ENCODE measurements at regions of chr1 and their contacts with region 1.

Region 1: DNA sequence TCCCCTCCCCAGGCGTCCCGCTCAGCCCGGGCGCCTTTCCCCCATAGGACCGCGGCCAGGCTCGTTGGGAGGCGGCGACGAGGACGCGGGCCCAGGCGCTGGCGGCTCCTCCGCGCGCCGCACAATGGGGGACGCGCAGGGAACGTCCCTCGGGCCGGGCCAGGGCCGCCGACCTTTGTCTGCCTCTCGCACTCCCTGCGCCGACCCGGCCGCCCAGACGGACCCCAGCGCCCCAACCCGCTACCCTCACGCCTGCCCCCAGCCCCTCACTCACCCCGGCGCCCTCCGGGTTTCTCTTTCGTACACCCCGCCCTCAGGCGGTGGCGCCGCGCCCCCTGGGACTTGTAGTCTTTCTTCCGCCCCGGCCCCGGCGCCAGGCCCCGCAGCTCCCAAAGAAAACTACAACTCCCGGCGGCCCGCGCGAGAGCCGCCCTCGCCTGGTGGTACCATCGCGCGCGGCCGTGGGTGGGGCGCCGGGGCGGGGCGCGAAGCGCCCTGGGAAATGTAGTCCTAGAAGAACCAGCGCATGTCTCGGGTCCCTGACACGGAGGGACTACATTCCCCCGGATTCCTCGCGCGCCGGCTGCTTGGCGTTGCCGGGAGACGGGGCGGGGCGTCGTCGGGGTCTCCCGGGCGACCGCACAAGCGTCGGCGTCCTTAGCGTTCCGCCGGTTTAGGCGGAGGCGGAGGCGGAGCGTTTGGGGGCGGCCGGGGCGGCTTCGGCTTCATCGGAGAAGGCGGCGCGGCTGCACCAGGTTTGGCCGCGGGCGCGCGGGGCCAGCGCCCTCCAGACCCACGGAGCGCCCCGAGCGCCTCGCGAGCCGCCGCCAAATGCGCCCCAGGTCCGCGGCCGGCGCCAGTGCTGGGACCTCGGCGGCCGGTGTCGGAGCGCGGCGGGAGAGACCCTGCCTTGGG is at the start of gene C1orf159:
- DNase-seq: peak; percentile 99
- ATAC-seq: peak; percentile 92
- H3K4me3 Mint-ChIP-seq: peak within 1 kb of the TSS; percentile 88
- H3K27ac Mint-ChIP-seq: peak within 1 kb of the TSS; percentile 80
- H3K4me1 Mint-ChIP-seq: peaks cover 9% of the 10 kb centered on the region
- H3K27me3 Mint-ChIP-seq: peaks cover 5% of the 10 kb centered on the region
- CTCF ChIP-seq: no peak
- total RNA-seq, gene C1orf159: 20.8 and 26.5 TPM in 2 replicates

Region 2: DNA sequence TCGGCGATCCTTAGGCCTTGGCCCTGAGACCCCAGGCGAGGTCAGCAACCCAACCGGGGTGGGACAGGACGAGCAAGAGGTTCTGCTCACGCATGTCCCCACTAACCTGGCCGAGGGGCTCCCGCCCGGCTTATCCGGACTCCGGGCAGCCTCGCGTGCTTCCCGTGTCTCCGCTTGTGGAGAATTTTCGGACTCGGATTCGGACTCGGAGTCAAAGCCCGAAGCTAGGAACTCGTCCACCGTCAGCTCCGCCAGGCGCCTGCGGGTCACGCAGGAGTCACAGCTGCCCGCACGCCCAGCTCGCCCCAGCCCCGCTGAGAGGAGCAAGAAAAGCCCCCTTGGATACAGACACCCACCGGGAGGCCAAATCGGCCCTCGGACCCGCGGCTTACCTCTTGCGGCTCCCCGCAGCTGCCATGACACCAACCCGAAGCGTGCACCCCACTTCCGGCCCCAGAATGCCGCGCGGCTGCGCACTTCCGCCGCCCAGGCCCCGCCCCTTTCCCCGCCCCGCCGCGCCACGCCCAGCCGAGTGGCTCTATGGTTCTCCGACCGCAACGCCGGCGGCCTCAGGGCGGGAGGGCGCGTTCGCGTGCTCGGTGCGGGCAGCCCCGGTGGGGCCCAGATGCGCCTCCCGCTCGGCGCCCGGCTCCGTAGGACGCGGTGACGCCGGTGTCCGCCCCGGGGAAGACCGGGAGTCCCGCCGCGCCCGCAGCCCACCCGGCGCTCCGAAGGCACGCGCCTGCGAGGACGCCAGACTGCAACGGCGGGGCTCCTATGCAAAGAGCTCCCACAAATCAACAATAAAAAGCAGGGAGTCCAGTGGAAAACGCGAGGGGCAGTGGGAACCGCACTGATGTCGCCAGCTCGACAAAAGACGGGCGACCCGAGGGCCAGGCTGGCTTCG is 157.0 kb before region 1 on chr1 and contains the start of gene NOC2L:
- CTCF ChIA-PET with region 1: no interaction called
- POLR2A ChIA-PET with region 1: no interaction called
- intact Hi-C with region 1: loop called (anchors 1 kb)
- DNase-seq: peak; percentile 95
- ATAC-seq: peak; percentile 90
- H3K4me3 Mint-ChIP-seq: peak within 1 kb of the TSS; percentile 89
- H3K27ac Mint-ChIP-seq: peak within 1 kb of the TSS; percentile 56
- H3K4me1 Mint-ChIP-seq: peaks cover 28% of the 10 kb centered on the region
- H3K27me3 Mint-ChIP-seq: no peaks in the 10 kb centered on the region
- CTCF ChIP-seq: no peak
- total RNA-seq, gene NOC2L: 95.5 and 96.8 TPM in 2 replicates

Region 3: GRCh38 chr1:1019122-1019999 is 96.7 kb before region 1 on chr1:
- CTCF ChIA-PET with region 1: no interaction called
- POLR2A ChIA-PET with region 1: no interaction called
- intact Hi-C with region 1: loop called (anchors 1 kb)
- DNase-seq: peak; percentile 84
- ATAC-seq: peak; percentile 87
- H3K4me3 Mint-ChIP-seq: peak overlapping the region; percentile 72
- H3K27ac Mint-ChIP-seq: no peak overlapping the region
- H3K4me1 Mint-ChIP-seq: peaks cover 14% of the 10 kb centered on the region
- H3K27me3 Mint-ChIP-seq: peaks cover 4% of the 10 kb centered on the region
- CTCF ChIP-seq: no peak

Region 4: DNA sequence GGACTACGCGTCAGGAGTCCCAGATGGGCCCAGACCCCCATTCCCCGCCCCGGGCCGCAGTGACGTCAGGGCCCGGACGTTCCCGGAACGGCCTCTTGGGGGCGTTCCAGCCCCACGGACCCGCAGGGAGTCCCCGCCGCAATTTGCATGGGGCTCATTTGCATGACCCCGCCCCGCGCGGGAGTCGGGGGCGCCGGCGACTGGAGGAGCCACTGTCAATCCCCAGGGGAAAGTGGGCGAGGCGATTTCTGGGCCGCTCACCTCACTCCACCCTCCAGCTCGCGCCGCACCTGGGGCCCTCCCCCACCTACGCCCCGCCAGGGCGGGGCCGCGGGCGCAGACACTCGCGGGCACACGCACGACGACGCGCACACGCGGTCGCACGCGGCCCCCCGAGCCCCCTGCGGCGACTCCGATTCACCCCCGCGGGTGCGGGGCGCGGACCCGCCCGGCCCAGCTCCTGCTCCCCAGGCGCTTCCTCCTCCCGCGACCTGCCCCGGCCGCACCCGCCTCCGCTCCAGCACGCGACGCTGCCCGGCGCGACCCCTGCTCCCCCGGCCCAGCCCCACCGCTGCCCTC is 82.9 kb before region 1 on chr1:
- CTCF ChIA-PET with region 1: interaction called, 7 read pairs
- POLR2A ChIA-PET with region 1: interaction called, 13 read pairs
- intact Hi-C with region 1: loop called (anchors 2 kb)
- DNase-seq: peak; percentile 97
- ATAC-seq: peak; percentile 96
- H3K4me3 Mint-ChIP-seq: peak overlapping the region; percentile 72
- H3K27ac Mint-ChIP-seq: peak overlapping the region; percentile 24
- H3K4me1 Mint-ChIP-seq: peaks cover 19% of the 10 kb centered on the region
- H3K27me3 Mint-ChIP-seq: no peaks in the 10 kb centered on the region
- CTCF ChIP-seq: peak; percentile 67

Region 5: DNA sequence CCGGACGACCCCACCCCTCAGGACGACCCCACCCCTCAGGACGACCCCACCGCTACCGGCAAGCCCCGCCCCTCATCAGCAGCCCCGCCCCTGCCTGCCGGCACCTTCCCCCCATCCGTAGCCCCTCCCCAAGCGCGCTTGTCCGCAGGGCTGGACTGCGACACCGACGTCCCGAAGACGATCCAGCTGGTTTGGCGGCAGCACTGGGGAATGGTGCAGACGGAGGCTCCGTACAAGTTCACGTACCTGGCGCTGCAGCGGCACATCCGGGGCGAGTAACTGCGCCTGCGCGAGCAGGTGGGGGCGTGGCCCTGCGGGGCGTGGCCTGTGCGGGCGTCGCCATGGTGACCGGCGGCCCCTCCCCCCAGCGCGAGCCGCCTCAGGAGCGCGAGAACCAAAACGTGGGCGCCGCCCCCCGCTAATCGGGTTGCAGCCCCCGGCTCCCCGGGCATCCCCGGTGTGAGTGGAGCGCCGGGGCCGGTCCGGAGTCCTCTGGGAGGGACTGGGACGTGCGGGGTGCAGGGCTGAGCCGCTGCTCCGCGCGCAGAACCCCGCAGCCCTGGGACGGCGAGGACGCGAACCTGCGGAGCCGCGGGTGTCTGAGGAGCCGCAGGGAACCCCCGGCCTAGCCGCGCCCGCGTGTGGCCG is 46.9 kb before region 1 on chr1:
- CTCF ChIA-PET with region 1: interaction called, 6 read pairs
- POLR2A ChIA-PET with region 1: interaction called, 9 read pairs
- intact Hi-C with region 1: loop called (anchors 1 kb)
- DNase-seq: peak; percentile 95
- ATAC-seq: peak; percentile 47
- H3K4me3 Mint-ChIP-seq: peak overlapping the region; percentile 81
- H3K27ac Mint-ChIP-seq: peak overlapping the region; percentile 72
- H3K4me1 Mint-ChIP-seq: peaks cover 37% of the 10 kb centered on the region
- H3K27me3 Mint-ChIP-seq: peaks cover 3% of the 10 kb centered on the region
- CTCF ChIP-seq: no peak

Region 6: DNA sequence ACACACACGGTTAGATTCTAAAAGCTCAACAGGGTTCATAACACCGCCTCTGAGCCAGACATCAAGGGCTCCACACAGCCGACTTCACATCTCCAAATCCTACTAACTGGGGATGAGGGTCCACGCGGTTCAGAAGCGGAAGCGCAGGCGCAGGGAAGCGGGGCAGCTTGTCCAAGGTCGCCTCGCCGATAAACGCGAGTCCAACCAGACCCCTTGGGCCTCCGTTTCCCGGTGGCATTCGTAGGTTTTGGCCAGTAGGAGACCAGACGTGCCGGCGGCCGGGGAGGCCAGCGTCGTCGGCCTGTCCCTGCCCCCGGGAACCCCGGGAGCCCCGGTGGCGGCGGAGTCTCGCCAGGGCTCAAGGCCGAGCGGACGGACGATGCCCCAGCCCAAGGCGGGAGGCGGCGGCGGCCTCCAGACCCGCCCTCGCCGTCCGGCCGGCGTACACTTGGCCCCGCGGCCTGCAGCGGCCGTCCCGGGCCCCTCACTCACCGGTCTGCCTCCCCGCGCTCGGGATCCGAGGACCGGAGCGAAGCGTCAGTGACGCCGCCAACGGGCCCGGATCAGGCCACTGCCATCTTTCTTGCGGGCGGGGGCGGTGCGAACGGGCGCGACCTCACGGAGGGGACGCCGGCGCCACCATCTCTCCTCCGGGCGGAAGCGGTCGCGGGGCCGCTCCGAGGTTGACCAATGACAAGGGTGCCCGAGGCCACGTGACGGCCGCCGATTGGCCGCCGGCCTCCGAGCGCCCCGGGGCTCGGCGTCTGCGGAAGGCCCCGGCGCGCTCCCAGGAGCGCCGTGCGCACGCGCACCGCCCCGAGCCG is 115.6 kb after region 1 on chr1 and contains the start of gene SDF4:
- CTCF ChIA-PET with region 1: interaction called, 6 read pairs
- POLR2A ChIA-PET with region 1: interaction called, 5 read pairs
- intact Hi-C with region 1: loop called (anchors 1 kb)
- DNase-seq: peak; percentile 91
- ATAC-seq: peak; percentile 94
- H3K4me3 Mint-ChIP-seq: peak within 1 kb of the TSS; percentile 92
- H3K27ac Mint-ChIP-seq: peak within 1 kb of the TSS; percentile 83
- H3K4me1 Mint-ChIP-seq: peaks cover 35% of the 10 kb centered on the region
- H3K27me3 Mint-ChIP-seq: no peaks in the 10 kb centered on the region
- CTCF ChIP-seq: no peak
- total RNA-seq, gene SDF4: 94.4 and 97.9 TPM in 2 replicates

Region 7: GRCh38 chr1:1273512-1274298 is 157.7 kb after region 1 on chr1 and contains the start of gene UBE2J2:
- CTCF ChIA-PET with region 1: interaction called, 6 read pairs
- POLR2A ChIA-PET with region 1: interaction called, 6 read pairs
- intact Hi-C with region 1: loop called (anchors 1 kb)
- DNase-seq: peak; percentile 82
- ATAC-seq: peak; percentile 96
- H3K4me3 Mint-ChIP-seq: peak within 1 kb of the TSS; percentile 87
- H3K27ac Mint-ChIP-seq: peak within 1 kb of the TSS; percentile 70
- H3K4me1 Mint-ChIP-seq: peaks cover 38% of the 10 kb centered on the region
- H3K27me3 Mint-ChIP-seq: no peaks in the 10 kb centered on the region
- CTCF ChIP-seq: no peak
- total RNA-seq, gene UBE2J2: 79.2 and 89.9 TPM in 2 replicates